ENCODE measurements at regions of chr22 and their contacts with region 1.

Region 1: GRCh38 chr22:37566903-37567820 is 6.9 kb downstream of the CDC42EP1 start:
- DNase-seq: peak; percentile 97
- ATAC-seq: peak; percentile 89
- H3K4me3 Mint-ChIP-seq: peak overlapping the region; percentile 49
- H3K27ac Mint-ChIP-seq: peak overlapping the region; percentile 85
- H3K4me1 Mint-ChIP-seq: peaks cover 26% of the 10 kb centered on the region
- H3K27me3 Mint-ChIP-seq: peaks cover 18% of the 10 kb centered on the region
- CTCF ChIP-seq: peak; percentile 92

Region 2: GRCh38 chr22:37316875-37317371 is 250.2 kb before region 1 on chr22:
- CTCF ChIA-PET with region 1: interaction called, 30 read pairs
- POLR2A ChIA-PET with region 1: interaction called, 3 read pairs
- intact Hi-C with region 1: loop called (anchors 10 kb)
- DNase-seq: peak; percentile 82
- ATAC-seq: peak; percentile 82
- H3K4me3 Mint-ChIP-seq: no peak overlapping the region
- H3K27ac Mint-ChIP-seq: no peak overlapping the region
- H3K4me1 Mint-ChIP-seq: peaks cover 42% of the 10 kb centered on the region
- H3K27me3 Mint-ChIP-seq: no peaks in the 10 kb centered on the region
- CTCF ChIP-seq: peak; percentile 95

Region 3: GRCh38 chr22:37486224-37486845 is 80.8 kb before region 1 on chr22 and contains the start of gene MFNG:
- CTCF ChIA-PET with region 1: interaction called, 20 read pairs
- POLR2A ChIA-PET with region 1: interaction called, 6 read pairs
- intact Hi-C with region 1: no loop called
- DNase-seq: peak; percentile 87
- ATAC-seq: peak; percentile 76
- H3K4me3 Mint-ChIP-seq: peak within 1 kb of the TSS; percentile 93
- H3K27ac Mint-ChIP-seq: peak within 1 kb of the TSS; percentile 97
- H3K4me1 Mint-ChIP-seq: peaks cover 51% of the 10 kb centered on the region
- H3K27me3 Mint-ChIP-seq: no peaks in the 10 kb centered on the region
- CTCF ChIP-seq: no peak
- total RNA-seq, gene MFNG: 155 to 160 TPM

Region 4: DNA sequence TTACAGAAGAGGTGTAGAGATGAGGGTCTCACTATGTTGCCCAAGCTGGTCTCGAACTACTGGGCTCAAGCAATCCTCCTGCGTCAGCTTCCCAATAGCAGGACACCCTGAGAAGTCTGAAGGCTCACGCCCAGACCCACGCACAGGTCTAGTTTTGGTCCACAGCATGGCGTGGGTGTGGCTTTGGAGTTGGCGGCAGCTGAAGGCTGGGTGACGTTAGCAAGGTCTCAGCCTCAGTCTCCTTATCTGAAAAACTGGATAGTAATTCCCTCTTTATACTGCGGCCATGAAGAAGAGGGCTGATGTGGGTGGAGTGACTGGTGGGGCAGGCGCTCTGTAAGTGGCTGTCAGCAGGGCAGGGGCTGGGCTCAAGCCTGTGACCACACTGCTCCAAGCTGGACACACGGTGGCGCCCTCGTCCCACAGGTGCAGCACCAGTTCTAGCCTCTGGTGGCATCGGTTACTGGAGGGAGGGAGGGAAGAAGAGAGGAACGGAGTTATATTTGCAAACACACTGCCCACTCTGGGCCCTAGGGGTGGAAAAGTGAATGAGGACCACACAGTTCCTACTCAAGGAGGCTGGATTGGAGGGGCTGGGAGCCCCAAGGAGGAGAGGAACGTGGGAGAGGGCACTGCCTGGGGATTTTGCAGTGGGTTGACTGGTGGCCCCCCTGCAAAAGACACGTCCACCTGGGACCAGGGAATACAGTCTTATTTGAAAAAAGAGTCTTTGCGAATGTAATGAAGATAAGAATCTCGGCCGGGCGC is 28.4 kb before region 1 on chr22:
- CTCF ChIA-PET with region 1: interaction called, 501 read pairs
- POLR2A ChIA-PET with region 1: interaction called, 12 read pairs
- intact Hi-C with region 1: loop called (anchors 1 kb)
- DNase-seq: peak; percentile 95
- ATAC-seq: peak; percentile 93
- H3K4me3 Mint-ChIP-seq: no peak overlapping the region
- H3K27ac Mint-ChIP-seq: peak overlapping the region; percentile 46
- H3K4me1 Mint-ChIP-seq: peaks cover 41% of the 10 kb centered on the region
- H3K27me3 Mint-ChIP-seq: peaks cover 27% of the 10 kb centered on the region
- CTCF ChIP-seq: peak; percentile 94

Region 5: GRCh38 chr22:37588546-37589215 is 21.5 kb after region 1 on chr22:
- CTCF ChIA-PET with region 1: interaction called, 166 read pairs
- POLR2A ChIA-PET with region 1: interaction called, 10 read pairs
- intact Hi-C with region 1: no loop called
- DNase-seq: no peak
- ATAC-seq: no peak
- H3K4me3 Mint-ChIP-seq: no peak overlapping the region
- H3K27ac Mint-ChIP-seq: no peak overlapping the region
- H3K4me1 Mint-ChIP-seq: peaks cover 11% of the 10 kb centered on the region
- H3K27me3 Mint-ChIP-seq: peaks cover 3% of the 10 kb centered on the region
- CTCF ChIP-seq: no peak

Measured in activated CD8-positive, alpha-beta T cell treated with anti-CD3 and anti-CD28 coated beads for 36 hours (primary cell).